CD14-positive monocyte (primary cell): ENCODE measurements at regions of chr16 and their contacts with region 1.

Region 1: GRCh38 chr16:53503270-53503923 is 388 bp upstream of the AKTIP start:
- DNase-seq: peak; percentile 100
- H3K4me3 ChIP-seq: peak overlapping the region; percentile 64 to 88 (median 71)
- H3K4me3 Mint-ChIP-seq: peak overlapping the region; percentile 91
- H3K27ac ChIP-seq: peak overlapping the region; percentile 78 to 83
- H3K27ac Mint-ChIP-seq: peak overlapping the region; percentile 79 to 95 (median 89)
- H3K4me1 ChIP-seq: peaks cover 27 to 31% of the 10 kb centered on the region in 2 donors
- H3K4me1 Mint-ChIP-seq: peaks cover 26% of the 10 kb centered on the region
- H3K27me3 ChIP-seq: peaks cover 0 to 3% of the 10 kb centered on the region in 2 donors
- H3K27me3 Mint-ChIP-seq: peaks cover 3 to 12% (median 12%) of the 10 kb centered on the region in 3 donors
- CTCF ChIP-seq: no peak

Region 2: DNA sequence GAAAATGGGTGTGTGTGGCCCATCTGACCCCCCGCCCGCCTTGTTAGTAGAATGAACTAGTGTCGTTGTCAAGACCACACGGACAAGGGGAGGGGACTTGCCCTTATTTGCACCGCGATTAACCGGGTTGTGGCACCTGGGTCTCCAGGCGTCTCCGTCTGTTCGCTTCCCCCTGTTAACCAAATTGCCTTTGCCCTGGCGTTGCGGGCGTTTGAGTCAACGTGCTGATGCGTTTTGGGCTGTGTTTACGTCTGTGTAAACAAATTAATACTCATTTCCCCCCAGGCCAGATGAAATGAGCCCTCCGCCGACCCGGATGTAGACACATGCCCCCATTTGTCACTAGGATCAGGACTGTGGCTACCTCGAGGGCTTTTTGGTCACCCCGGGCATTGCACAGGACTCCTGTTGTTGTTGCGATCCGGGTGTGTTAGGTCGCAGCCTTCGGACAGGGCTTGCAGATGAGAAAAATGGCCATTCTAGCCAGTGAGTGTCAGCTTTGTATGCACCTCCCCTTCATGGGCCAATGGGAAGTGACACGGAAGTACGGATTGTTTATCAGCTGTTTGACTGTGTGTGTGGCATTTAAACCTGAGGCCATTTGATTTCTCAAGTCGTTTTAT is 68.2 kb before region 1 on chr16:
- intact Hi-C with region 1: loop called in 1 of 2 experiments (anchors 2 kb)
- DNase-seq: peak; percentile 76 to 84 (median 82)
- H3K4me3 ChIP-seq: peak overlapping the region; percentile 77 to 94 (median 87)
- H3K4me3 Mint-ChIP-seq: peak overlapping the region; percentile 97 to 98
- H3K27ac ChIP-seq: peak overlapping the region; percentile 87 to 90
- H3K27ac Mint-ChIP-seq: peak overlapping the region; percentile 92 to 98 (median 96)
- H3K4me1 ChIP-seq: peaks cover 11 to 19% of the 10 kb centered on the region in 2 donors
- H3K4me1 Mint-ChIP-seq: peaks cover 22% of the 10 kb centered on the region
- H3K27me3 ChIP-seq: no peaks in the 10 kb centered on the region
- H3K27me3 Mint-ChIP-seq: peaks cover 0 to 5% (median 3%) of the 10 kb centered on the region in 3 donors
- CTCF ChIP-seq: no peak

Region 3: DNA sequence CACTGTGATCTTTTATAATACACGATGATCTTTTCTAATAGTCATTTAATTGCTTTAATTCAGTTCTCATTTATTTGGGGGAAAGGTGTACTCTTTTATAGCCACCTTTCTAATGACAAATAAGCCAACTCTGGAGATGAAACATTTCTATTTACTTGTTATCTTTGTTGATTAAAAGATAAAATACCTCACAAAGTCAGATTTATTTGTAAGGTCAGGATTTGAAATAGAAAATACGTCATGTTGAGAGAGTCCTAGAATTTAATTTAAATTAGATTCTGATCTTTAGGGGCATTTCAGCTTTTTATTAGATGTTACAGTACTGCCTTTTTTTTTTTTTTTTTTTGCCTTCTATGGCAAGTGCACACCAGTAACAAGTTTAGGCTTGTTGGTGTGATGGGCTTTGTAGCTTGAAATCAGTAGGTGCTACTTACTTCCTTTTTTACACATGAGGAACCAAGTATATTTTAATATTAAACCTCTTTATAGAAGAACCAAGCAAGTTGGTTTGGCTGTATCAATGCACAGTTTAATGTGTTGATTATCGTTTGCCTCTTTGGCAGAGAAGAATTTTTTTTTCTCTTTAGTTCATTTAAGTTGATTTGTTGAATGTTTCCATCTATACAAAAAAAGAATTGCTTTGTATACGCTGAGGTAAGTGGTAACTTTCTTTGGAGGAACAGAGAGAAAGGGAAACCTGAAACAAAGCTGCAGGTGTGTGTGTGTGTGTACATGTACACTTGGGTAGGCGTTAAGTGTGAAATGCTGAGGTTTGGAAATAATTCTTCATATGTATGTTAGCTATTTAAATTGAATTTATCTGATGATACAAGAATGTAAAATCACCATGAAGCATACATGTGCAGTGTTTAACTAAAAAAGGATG is 53.5 kb before region 1 on chr16:
- intact Hi-C with region 1: no loop called
- DNase-seq: no peak
- H3K4me3 ChIP-seq: no peak overlapping the region
- H3K4me3 Mint-ChIP-seq: no peak overlapping the region
- H3K27ac ChIP-seq: no peak overlapping the region
- H3K27ac Mint-ChIP-seq: no peak overlapping the region
- H3K4me1 ChIP-seq: no peaks in the 10 kb centered on the region
- H3K4me1 Mint-ChIP-seq: no peaks in the 10 kb centered on the region
- H3K27me3 ChIP-seq: no peaks in the 10 kb centered on the region
- H3K27me3 Mint-ChIP-seq: no peaks in the 10 kb centered on the region
- CTCF ChIP-seq: no peak

Region 4: GRCh38 chr16:53558710-53559109 is 55.3 kb after region 1 on chr16:
- intact Hi-C with region 1: no loop called
- DNase-seq: no peak
- H3K4me3 ChIP-seq: no peak overlapping the region
- H3K4me3 Mint-ChIP-seq: no peak overlapping the region
- H3K27ac ChIP-seq: no peak overlapping the region
- H3K27ac Mint-ChIP-seq: peak overlapping the region in 1 of 7 donors; percentile 42
- H3K4me1 ChIP-seq: no peaks in the 10 kb centered on the region
- H3K4me1 Mint-ChIP-seq: no peaks in the 10 kb centered on the region
- H3K27me3 ChIP-seq: no peaks in the 10 kb centered on the region
- H3K27me3 Mint-ChIP-seq: peaks cover 0 to 17% (median 4%) of the 10 kb centered on the region in 3 donors
- CTCF ChIP-seq: no peak